ENCODE measurements at regions of chr1 and their contacts with region 1.

Region 1: DNA sequence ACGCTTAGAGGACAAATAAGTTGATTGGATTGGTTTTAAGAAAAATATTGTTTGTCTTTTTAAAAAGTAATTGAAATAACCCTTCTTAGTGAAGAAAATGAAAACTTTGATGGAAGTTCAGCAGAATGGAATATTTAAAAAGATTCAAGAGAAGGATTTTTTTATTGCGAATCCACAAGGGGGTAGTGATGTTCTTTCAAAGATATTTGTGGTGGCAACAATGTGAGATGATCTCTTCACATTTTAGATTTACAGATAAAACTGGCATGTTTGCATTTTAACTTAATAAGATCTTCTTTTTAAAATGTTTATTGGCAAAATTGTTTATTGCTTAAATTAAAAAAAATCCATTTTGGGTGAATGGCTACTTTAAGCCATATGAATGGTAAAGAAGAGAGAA is 8.9 kb downstream of the CAMTA1 start:
- DNase-seq: peak in 1 of 42 donors; percentile 21

Region 2: DNA sequence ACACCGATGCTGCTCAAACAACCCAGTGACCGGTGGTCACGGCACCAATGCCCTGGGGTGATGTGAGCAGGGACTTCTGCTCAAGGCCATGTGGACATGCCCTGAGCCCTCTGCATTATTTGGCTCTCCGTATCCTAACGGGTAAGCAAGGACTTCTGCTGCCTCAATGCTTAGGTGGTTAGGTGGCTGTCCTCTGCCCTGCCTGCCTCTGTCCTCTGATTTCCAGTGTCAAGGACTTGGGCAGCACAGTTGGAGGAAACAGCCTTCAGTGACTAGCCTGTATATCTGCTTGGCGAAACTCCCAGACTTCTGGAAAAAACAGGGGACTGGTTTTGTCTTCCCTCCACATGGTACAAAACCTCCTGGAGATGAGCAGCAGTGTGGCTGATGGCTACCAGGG is 127.0 kb before region 1 on chr1:
- intact Hi-C with region 1: no loop called
- DNase-seq: peak in 1 of 42 donors; percentile 13

Region 3: DNA sequence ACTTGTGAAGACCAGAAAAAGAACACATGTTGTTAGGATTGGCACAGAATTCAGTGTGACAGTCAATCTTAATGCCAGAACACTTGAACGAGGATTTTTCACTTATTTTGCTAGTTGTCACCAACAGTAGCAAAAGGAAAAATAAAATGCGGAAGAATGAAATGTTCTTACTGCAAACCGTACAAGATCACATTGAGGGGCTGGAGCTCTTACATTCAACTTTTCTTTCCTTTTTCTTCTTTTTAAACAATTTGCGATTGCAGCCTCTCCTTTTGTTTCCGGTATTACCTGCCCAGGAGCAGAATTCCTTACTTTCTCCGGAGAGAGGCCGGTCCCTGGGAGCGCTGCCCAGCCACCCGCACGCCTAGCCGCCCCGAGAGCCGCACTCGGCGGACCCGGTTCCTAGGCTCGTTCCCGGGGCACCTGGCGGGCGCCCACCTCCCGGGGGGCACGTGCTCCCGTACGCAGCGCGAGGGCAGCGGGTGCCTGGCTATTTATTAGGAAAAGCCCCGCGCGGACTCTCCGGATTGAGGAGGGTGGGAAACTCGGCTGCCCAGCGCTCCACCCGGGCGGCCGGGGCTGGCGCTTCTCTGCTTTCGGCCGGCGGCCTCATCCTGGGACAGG is 10.1 kb before region 1 on chr1:
- intact Hi-C with region 1: no loop called
- DNase-seq: no peak

Region 4: GRCh38 chr1:6889875-6890480 is 95.8 kb after region 1 on chr1:
- intact Hi-C with region 1: loop called (anchors 10 kb)
- DNase-seq: peak in 40 of 42 donors; percentile 31 to 83 (median 61)

Region 5: GRCh38 chr1:7070389-7071029 is 276.3 kb after region 1 on chr1:
- intact Hi-C with region 1: loop called (anchors 10 kb)
- DNase-seq: peak; percentile 40 to 86 (median 70)

Measured in head of caudate nucleus (tissue), 42 donors.